ENCODE measurements at regions of chr1 and their contacts with region 1.

Region 1: GRCh38 chr1:186212544-186213226 is 162.4 kb downstream of the TPR start:
- DNase-seq: peak in 1 of 2 donors; percentile 72
- H3K4me3 ChIP-seq: no peak overlapping the region
- H3K27ac ChIP-seq: no peak overlapping the region
- H3K4me1 ChIP-seq: no peaks in the 10 kb centered on the region
- H3K27me3 ChIP-seq: no peaks in the 10 kb centered on the region
- CTCF ChIP-seq: peak; percentile 80 to 90 (median 87)

Region 2: GRCh38 chr1:185317034-185317885 is 895.4 kb before region 1 on chr1 and contains the start of gene IVNS1ABP:
- intact Hi-C with region 1: loop called (anchors 5 kb)
- DNase-seq: peak; percentile 86 to 97
- H3K4me3 ChIP-seq: peak within 1 kb of the TSS; percentile 87 to 98
- H3K27ac ChIP-seq: peak within 1 kb of the TSS; percentile 96 to 98
- H3K4me1 ChIP-seq: peaks cover 0 to 17% of the 10 kb centered on the region in 2 donors
- H3K27me3 ChIP-seq: no peaks in the 10 kb centered on the region
- CTCF ChIP-seq: peak in 2 of 3 experiments; percentile 12 to 35
- total RNA-seq, gene IVNS1ABP: 61.0 TPM

Region 3: DNA sequence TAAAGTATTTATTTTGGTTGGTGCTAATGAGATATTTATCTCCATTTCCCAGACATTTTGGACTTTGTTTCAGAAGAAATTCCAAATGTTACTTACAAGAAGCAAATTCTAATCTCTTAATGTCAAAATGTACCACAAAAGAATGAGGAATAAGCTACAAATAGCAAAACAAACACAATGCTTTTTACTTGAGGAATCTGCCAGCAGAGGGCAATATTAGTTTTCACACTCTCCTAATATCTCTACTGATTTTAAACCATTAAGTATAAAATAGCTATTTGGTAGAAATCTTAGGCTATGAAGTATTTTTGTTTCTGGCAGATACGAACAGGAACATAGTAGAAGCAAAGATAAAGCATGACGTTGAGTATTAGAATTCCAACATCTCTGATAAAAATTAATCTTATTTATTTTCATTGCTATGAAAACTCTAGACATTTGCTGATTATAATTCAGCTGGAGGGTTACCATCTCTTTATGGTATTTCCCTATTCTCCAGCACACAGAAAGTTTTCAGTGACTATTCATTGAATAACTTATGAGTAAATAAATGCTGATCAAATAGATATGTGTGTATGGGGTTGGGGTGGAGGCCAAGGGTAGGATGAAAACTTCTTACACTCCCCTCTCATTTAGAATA is 491.9 kb before region 1 on chr1:
- intact Hi-C with region 1: loop called (anchors 1 kb)
- DNase-seq: no peak
- H3K4me3 ChIP-seq: no peak overlapping the region
- H3K27ac ChIP-seq: peak overlapping the region; percentile 48 to 57
- H3K4me1 ChIP-seq: peaks cover 0 to 14% of the 10 kb centered on the region in 2 donors
- H3K27me3 ChIP-seq: no peaks in the 10 kb centered on the region
- CTCF ChIP-seq: peak; percentile 44 to 62 (median 50)

Region 4: GRCh38 chr1:185803241-185803640 is 409.4 kb before region 1 on chr1:
- intact Hi-C with region 1: no loop called
- DNase-seq: no peak
- H3K4me3 ChIP-seq: no peak overlapping the region
- H3K27ac ChIP-seq: peak overlapping the region; percentile 32 to 47
- H3K4me1 ChIP-seq: peaks cover 0 to 9% of the 10 kb centered on the region in 2 donors
- H3K27me3 ChIP-seq: no peaks in the 10 kb centered on the region
- CTCF ChIP-seq: no peak

Region 5: DNA sequence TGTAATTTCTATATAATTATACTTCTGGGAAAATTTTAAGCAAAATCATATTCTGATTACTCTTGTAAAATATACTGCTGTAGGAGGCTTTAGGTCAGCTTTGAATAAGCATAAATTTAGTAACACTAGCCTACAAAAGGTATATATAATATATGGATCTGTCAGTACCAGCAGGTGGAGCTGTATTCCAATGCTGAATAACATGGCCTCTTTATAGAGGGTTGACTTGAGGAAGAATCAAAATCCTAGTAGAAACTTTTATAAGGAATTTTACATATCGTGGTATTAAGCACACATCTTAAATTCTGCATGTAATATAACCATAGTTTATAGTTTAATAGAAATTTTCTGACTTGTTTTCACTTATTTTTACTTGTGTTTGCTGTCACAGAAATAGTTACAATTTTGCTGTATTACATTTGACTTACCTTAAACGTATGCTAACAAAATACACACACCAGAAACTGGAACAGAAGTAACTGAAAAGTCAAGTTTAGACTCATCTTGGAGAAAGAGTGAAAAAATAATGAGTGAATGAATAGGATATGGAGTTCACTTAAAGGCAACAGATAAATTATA is 399.2 kb before region 1 on chr1:
- intact Hi-C with region 1: loop called (anchors 5 kb)
- DNase-seq: no peak
- H3K4me3 ChIP-seq: no peak overlapping the region
- H3K27ac ChIP-seq: no peak overlapping the region
- H3K4me1 ChIP-seq: peaks cover 0 to 8% of the 10 kb centered on the region in 2 donors
- H3K27me3 ChIP-seq: no peaks in the 10 kb centered on the region
- CTCF ChIP-seq: peak; percentile 26 to 58 (median 34)

Region 6: DNA sequence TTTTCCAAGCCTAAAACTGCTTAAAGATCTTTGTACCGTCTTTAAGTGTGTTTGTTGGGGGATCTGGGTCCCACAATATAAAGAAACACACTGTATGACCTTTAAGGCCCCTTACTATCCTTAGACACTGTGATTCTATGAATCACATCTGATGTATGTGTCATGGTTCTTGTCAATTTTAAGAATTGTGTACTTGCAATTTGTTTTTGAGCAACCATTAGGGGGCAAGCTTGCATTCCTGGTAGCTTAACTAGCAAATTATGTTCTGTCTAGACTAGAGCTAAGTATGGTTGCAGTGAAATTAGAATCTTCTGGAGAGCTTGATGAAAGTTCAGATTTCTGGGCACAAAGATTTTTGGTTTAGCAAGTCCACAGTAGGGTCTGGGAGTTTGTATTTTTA is 57.1 kb before region 1 on chr1:
- intact Hi-C with region 1: loop called (anchors 1 kb)
- DNase-seq: no peak
- H3K4me3 ChIP-seq: no peak overlapping the region
- H3K27ac ChIP-seq: peak overlapping the region in 1 of 2 donors; percentile 15
- H3K4me1 ChIP-seq: peaks cover 0 to 13% of the 10 kb centered on the region in 2 donors
- H3K27me3 ChIP-seq: no peaks in the 10 kb centered on the region
- CTCF ChIP-seq: peak; percentile 16 to 50 (median 26)

Region 7: GRCh38 chr1:186330758-186331157 is 118.1 kb after region 1 on chr1:
- intact Hi-C with region 1: no loop called
- DNase-seq: no peak
- H3K4me3 ChIP-seq: no peak overlapping the region
- H3K27ac ChIP-seq: no peak overlapping the region
- H3K4me1 ChIP-seq: no peaks in the 10 kb centered on the region
- H3K27me3 ChIP-seq: no peaks in the 10 kb centered on the region
- CTCF ChIP-seq: peak in 2 of 3 experiments; percentile 14 to 22

Measured in ascending aorta (tissue), 2 donors.